Activated T-helper 2 cell treated with anti-CD3 and anti-CD28 coated beads, Interferon-gamma antibody, Interleukin-2, Interleukin-4, amounts not matched to agents 10 μg/mL and 5 μg/mL and 100 μg/mL, durations not matched to agents 14 hours and 24 hours and 36 hours (primary cell): ENCODE measurements at regions of chr5 and their contacts with region 1.

Region 1: DNA sequence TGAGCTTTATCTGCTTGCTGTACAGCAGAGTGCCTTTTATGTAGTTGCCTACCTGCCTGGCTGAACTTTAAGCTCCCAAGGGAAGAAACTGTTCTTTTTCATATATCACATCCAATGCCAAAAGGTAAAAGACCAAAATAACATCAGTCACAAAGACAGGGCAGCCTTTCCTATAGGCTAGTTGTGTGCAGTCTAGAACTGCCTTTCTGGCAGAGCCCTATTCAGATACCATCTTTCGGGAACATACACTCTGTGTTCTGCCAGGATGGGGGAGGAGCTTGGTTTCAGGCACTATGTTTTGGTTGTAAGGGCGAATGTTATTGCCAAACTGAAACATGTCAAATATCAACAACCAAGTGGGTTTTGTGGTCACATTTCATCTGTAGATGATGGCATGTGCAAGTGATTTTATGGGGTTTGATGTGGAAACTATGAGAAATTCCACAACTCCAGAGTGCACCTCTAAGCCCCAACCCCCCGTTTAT is 314.5 kb downstream of the ADGRV1 start:
- DNase-seq: no peak
- H3K4me3 Mint-ChIP-seq: no peak overlapping the region
- H3K27ac Mint-ChIP-seq: peak overlapping the region; percentile 18
- H3K4me1 Mint-ChIP-seq: peaks cover 39% of the 10 kb centered on the region
- H3K27me3 Mint-ChIP-seq: peaks cover 35% of the 10 kb centered on the region

Region 2: GRCh38 chr5:90890183-90890582 is 17.1 kb after region 1 on chr5:
- intact Hi-C with region 1: loop called (anchors 2 kb)
- DNase-seq: no peak
- H3K4me3 Mint-ChIP-seq: no peak overlapping the region
- H3K27ac Mint-ChIP-seq: no peak overlapping the region
- H3K4me1 Mint-ChIP-seq: no peaks in the 10 kb centered on the region
- H3K27me3 Mint-ChIP-seq: peaks cover 19% of the 10 kb centered on the region

Region 3: GRCh38 chr5:90956511-90957097 is 83.5 kb after region 1 on chr5:
- intact Hi-C with region 1: no loop called
- DNase-seq: no peak
- H3K4me3 Mint-ChIP-seq: peak overlapping the region; percentile 1
- H3K27ac Mint-ChIP-seq: peak overlapping the region; percentile 91
- H3K4me1 Mint-ChIP-seq: peaks cover 22% of the 10 kb centered on the region
- H3K27me3 Mint-ChIP-seq: no peaks in the 10 kb centered on the region

Region 4: GRCh38 chr5:91007251-91007650 is 134.2 kb after region 1 on chr5:
- intact Hi-C with region 1: no loop called
- DNase-seq: no peak
- H3K4me3 Mint-ChIP-seq: no peak overlapping the region
- H3K27ac Mint-ChIP-seq: no peak overlapping the region
- H3K4me1 Mint-ChIP-seq: peaks cover 4% of the 10 kb centered on the region
- H3K27me3 Mint-ChIP-seq: peaks cover 11% of the 10 kb centered on the region